Esophagus muscularis mucosa (tissue), 4 donors: ENCODE measurements at regions of chr16 and their contacts with region 1.

Region 1: GRCh38 chr16:16014329-16015144 is 65.1 kb downstream of the ABCC1 start:
- DNase-seq: no peak
- H3K4me3 ChIP-seq: no peak overlapping the region
- H3K27ac ChIP-seq: peak overlapping the region; percentile 77 to 84 (median 82)
- H3K4me1 ChIP-seq: peaks cover 28 to 92% (median 71%) of the 10 kb centered on the region in 4 donors
- H3K27me3 ChIP-seq: no peaks in the 10 kb centered on the region
- CTCF ChIP-seq: no peak
- EP300 ChIP-seq: no peak
- POLR2A ChIP-seq: no peak

Region 2: GRCh38 chr16:15949210-15950160 is 65.1 kb before region 1 on chr16 and contains the start of gene ABCC1:
- intact Hi-C with region 1: loop called (anchors 5 kb)
- DNase-seq: no peak
- H3K4me3 ChIP-seq: peak within 1 kb of the TSS; percentile 93 to 99 (median 94)
- H3K27ac ChIP-seq: peak within 1 kb of the TSS; percentile 93 to 98 (median 95)
- H3K4me1 ChIP-seq: peaks cover 24 to 60% (median 50%) of the 10 kb centered on the region in 4 donors
- H3K27me3 ChIP-seq: no peaks in the 10 kb centered on the region
- CTCF ChIP-seq: peak in 1 of 3 experiments; percentile 26
- EP300 ChIP-seq: no peak
- POLR2A ChIP-seq: no peak
- total RNA-seq, gene ABCC1: 61.8 to 141 (median 103) TPM